ENCODE measurements at regions of chr14 and their contacts with region 1.

Region 1: GRCh38 chr14:93206793-93207467 is at the starts of genes GON7 and UBR7:
- DNase-seq: peak; percentile 89
- H3K4me3 Mint-ChIP-seq: peak within 1 kb of the TSS; percentile 100
- H3K27ac Mint-ChIP-seq: peak within 1 kb of the TSS; percentile 98
- H3K4me1 Mint-ChIP-seq: peaks cover 25% of the 10 kb centered on the region
- H3K27me3 Mint-ChIP-seq: no peaks in the 10 kb centered on the region
- total RNA-seq, gene GON7: 13.4 and 15.2 TPM in 2 replicates
- total RNA-seq, gene UBR7: 30.9 and 32.9 TPM in 2 replicates

Region 2: DNA sequence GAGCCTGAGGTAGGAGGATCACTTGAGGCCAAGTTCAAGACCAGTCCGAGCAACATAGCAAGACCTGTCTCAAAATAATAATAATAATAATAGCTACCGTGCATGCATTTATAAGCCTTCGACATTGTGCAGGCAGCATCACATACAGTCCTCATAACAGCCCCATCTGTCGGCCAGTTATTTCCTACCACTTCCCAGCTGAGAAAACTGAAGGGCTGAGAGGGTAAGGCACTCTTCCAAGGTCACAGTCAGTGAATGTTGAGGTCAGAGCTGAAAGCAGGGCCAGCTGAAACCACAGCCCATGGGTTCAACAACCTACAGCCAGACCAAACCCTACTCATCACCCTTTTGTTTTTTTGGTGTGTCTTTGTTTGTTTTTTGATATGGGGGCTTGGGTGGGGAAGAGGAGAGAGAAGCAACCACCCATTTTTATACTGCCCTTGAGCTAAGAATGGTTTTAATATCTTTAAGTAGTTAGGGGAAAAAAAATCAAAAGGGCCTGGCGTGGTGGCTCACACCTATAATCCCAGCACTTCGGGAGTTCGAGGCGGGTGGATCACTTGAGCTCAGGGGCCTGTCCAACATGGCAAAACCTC is 74.4 kb before region 1 on chr14:
- intact Hi-C with region 1: no loop called
- DNase-seq: no peak
- H3K4me3 Mint-ChIP-seq: no peak overlapping the region
- H3K27ac Mint-ChIP-seq: no peak overlapping the region
- H3K4me1 Mint-ChIP-seq: no peaks in the 10 kb centered on the region
- H3K27me3 Mint-ChIP-seq: peaks cover 10% of the 10 kb centered on the region

Region 3: GRCh38 chr14:93184388-93185353 is 22.3 kb before region 1 on chr14 and contains the starts of genes LYSET and MOAP1:
- intact Hi-C with region 1: loop called (anchors 1 kb)
- DNase-seq: peak; percentile 88
- H3K4me3 Mint-ChIP-seq: peak within 1 kb of the TSS; percentile 93
- H3K27ac Mint-ChIP-seq: peak within 1 kb of the TSS; percentile 89
- H3K4me1 Mint-ChIP-seq: peaks cover 28% of the 10 kb centered on the region
- H3K27me3 Mint-ChIP-seq: no peaks in the 10 kb centered on the region
- total RNA-seq, gene LYSET: 12.2 and 13.4 TPM in 2 replicates
- total RNA-seq, gene MOAP1: 17.8 and 18.7 TPM in 2 replicates

Region 4: GRCh38 chr14:93332853-93333630 is 126.1 kb after region 1 on chr14 and contains the start of gene BTBD7:
- intact Hi-C with region 1: loop called (anchors 1 kb)
- DNase-seq: peak; percentile 92
- H3K4me3 Mint-ChIP-seq: peak within 1 kb of the TSS; percentile 89
- H3K27ac Mint-ChIP-seq: peak within 1 kb of the TSS; percentile 92
- H3K4me1 Mint-ChIP-seq: peaks cover 30% of the 10 kb centered on the region
- H3K27me3 Mint-ChIP-seq: no peaks in the 10 kb centered on the region
- total RNA-seq, gene BTBD7: 16.5 and 17.9 TPM in 2 replicates

Measured in activated T-helper 2 cell treated with anti-CD3 and anti-CD28 coated beads, Interferon-gamma antibody, Interleukin-2, Interleukin-4, amounts not matched to agents 10 μg/mL and 5 μg/mL and 100 μg/mL, durations not matched to agents 14 hours and 24 hours and 36 hours (primary cell).